Esophagus muscularis mucosa (tissue), 4 donors: ENCODE measurements at regions of chr1 and their contacts with region 1.

Region 1: DNA sequence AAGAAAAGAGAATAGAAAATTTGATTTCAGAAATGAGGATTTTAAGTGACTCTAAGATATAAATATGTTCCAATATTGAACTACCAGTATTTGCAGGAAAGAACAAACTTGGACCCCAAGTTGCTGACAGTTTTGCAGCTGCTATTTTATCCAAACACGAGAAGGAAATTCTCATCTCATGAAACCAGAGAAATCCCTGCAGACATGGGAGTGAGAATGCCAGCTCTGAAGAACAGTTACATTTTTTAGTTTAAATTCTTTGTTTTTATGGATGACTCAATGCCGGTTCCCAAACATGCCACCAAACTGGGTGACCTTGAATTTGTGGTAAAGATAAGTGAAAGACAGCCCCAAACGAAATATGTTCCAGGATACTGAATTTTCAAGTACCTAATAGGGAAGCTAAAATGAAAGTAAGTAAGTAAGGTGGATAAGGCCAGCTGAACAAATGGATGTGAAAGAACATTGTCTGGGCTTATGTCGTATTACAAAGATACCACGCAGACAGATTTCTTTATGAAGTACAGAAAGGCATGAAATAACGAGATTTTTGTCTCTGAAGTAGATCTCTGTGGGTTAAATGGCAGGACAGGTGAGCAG is 19.9 kb downstream of the TLR5 start:
- DNase-seq: no peak
- H3K4me3 ChIP-seq: peak overlapping the region; percentile 8 to 27 (median 18)
- H3K27ac ChIP-seq: no peak overlapping the region
- H3K4me1 ChIP-seq: peaks cover 4 to 8% (median 7%) of the 10 kb centered on the region in 4 donors
- H3K27me3 ChIP-seq: no peaks in the 10 kb centered on the region
- CTCF ChIP-seq: no peak
- EP300 ChIP-seq: no peak
- POLR2A ChIP-seq: no peak

Region 2: GRCh38 chr1:222792744-222793143 is 330.4 kb before region 1 on chr1:
- intact Hi-C with region 1: loop called (anchors 5 kb)
- DNase-seq: no peak
- H3K4me3 ChIP-seq: no peak overlapping the region
- H3K27ac ChIP-seq: no peak overlapping the region
- H3K4me1 ChIP-seq: peaks cover 0 to 12% (median 6%) of the 10 kb centered on the region in 4 donors
- H3K27me3 ChIP-seq: no peaks in the 10 kb centered on the region
- CTCF ChIP-seq: peak; percentile 59 to 71 (median 61)
- EP300 ChIP-seq: no peak
- POLR2A ChIP-seq: no peak

Region 3: GRCh38 chr1:222829868-222830267 is 293.2 kb before region 1 on chr1:
- intact Hi-C with region 1: no loop called
- DNase-seq: no peak
- H3K4me3 ChIP-seq: no peak overlapping the region
- H3K27ac ChIP-seq: peak overlapping the region in 1 of 4 donors; percentile 15
- H3K4me1 ChIP-seq: peaks cover 0 to 30% (median 24%) of the 10 kb centered on the region in 4 donors
- H3K27me3 ChIP-seq: no peaks in the 10 kb centered on the region
- CTCF ChIP-seq: no peak
- EP300 ChIP-seq: no peak
- POLR2A ChIP-seq: no peak

Region 4: GRCh38 chr1:223087291-223088255 is 35.5 kb before region 1 on chr1:
- intact Hi-C with region 1: loop called (anchors 5 kb)
- DNase-seq: no peak
- H3K4me3 ChIP-seq: peak overlapping the region; percentile 7 to 30 (median 20)
- H3K27ac ChIP-seq: peak overlapping the region; percentile 71 to 78 (median 74)
- H3K4me1 ChIP-seq: peaks cover 4 to 68% (median 64%) of the 10 kb centered on the region in 4 donors
- H3K27me3 ChIP-seq: no peaks in the 10 kb centered on the region
- CTCF ChIP-seq: no peak
- EP300 ChIP-seq: no peak
- POLR2A ChIP-seq: no peak